T-cell (primary cell): ENCODE measurements at regions of chr17 and their contacts with region 1.

Region 1: DNA sequence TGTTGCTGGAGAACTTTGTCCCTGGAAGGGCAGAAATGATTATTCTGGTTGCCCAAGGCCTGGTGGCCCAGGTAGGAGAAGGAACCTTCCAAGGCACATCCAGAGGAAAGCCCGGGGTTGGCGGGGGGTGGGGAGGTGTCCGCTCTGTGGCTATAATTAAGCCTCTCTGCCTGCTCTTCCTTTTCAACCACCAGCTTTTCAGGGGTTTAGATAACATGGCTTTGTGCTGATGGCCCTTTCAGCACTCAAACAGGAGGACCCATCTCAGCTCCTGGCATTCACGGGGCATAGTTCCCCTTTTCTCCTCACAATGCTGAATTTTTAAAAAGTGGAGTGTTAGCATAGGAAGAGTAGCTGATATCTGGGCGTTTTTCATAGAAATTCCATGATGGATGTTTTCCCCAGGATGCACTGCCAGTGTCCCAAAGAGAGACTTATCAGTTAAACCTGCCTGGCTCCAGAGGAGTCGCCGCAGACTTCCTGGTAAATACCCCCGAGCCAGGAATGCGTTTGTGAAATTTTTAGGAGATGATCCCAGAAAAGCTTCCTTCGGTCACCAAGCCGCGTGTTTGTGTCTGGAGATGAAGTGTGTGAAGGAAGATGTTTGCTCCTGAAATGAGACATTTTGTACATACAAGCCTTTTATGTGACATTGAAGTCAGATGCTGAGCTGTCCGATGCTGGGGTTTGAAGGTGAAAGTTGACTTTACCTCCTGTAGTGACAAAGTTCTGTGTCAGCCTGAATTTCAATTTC is 188.5 kb downstream of the MSI2 start:
- DNase-seq: no peak
- ATAC-seq: no peak
- H3K4me3 ChIP-seq: no peak overlapping the region
- H3K4me3 Mint-ChIP-seq: no peak overlapping the region
- H3K27ac ChIP-seq: no peak overlapping the region
- H3K27ac Mint-ChIP-seq: no peak overlapping the region
- H3K4me1 ChIP-seq: peaks cover 13 to 53% of the 10 kb centered on the region in 2 experiments
- H3K4me1 Mint-ChIP-seq: peaks cover 69 to 78% (median 74%) of the 10 kb centered on the region in 3 donors
- H3K27me3 ChIP-seq: no peaks in the 10 kb centered on the region
- H3K27me3 Mint-ChIP-seq: no peaks in the 10 kb centered on the region

Region 2: GRCh38 chr17:57455063-57455914 is 10.4 kb after region 1 on chr17:
- CTCF ChIA-PET with region 1: interaction called, 3 to 11 read pairs
- POLR2A ChIA-PET with region 1: interaction called, 3 to 5 read pairs
- DNase-seq: peak in 14 of 35 experiments; percentile 7 to 52 (median 26)
- ATAC-seq: peak; percentile 74 to 89 (median 78)
- H3K4me3 ChIP-seq: peak overlapping the region in 1 of 2 donors; percentile 9
- H3K4me3 Mint-ChIP-seq: peak overlapping the region; percentile 51 to 81 (median 68)
- H3K27ac ChIP-seq: peak overlapping the region; percentile 44
- H3K27ac Mint-ChIP-seq: peak overlapping the region; percentile 85 to 90
- H3K4me1 ChIP-seq: peaks cover 20 to 76% of the 10 kb centered on the region in 2 experiments
- H3K4me1 Mint-ChIP-seq: peaks cover 68 to 79% (median 75%) of the 10 kb centered on the region in 3 donors
- H3K27me3 ChIP-seq: peaks cover 0 to 5% of the 10 kb centered on the region in 2 experiments
- H3K27me3 Mint-ChIP-seq: no peaks in the 10 kb centered on the region

Region 3: GRCh38 chr17:57955183-57955931 is 510.5 kb after region 1 on chr17 and contains the start of gene CUEDC1:
- CTCF ChIA-PET with region 1: no interaction called
- POLR2A ChIA-PET with region 1: no interaction called
- DNase-seq: peak; percentile 22 to 75 (median 50)
- ATAC-seq: peak; percentile 84 to 86 (median 85)
- H3K4me3 ChIP-seq: peak within 1 kb of the TSS; percentile 58 to 86
- H3K4me3 Mint-ChIP-seq: peak within 1 kb of the TSS; percentile 67 to 79 (median 76)
- H3K27ac ChIP-seq: no peak within 1 kb of the TSS
- H3K27ac Mint-ChIP-seq: no peak within 1 kb of the TSS
- H3K4me1 ChIP-seq: peaks cover 7 to 20% of the 10 kb centered on the region in 2 experiments
- H3K4me1 Mint-ChIP-seq: peaks cover 24 to 31% (median 27%) of the 10 kb centered on the region in 3 donors
- H3K27me3 ChIP-seq: peaks cover 2 to 32% of the 10 kb centered on the region in 2 experiments
- H3K27me3 Mint-ChIP-seq: peaks cover 10 to 25% of the 10 kb centered on the region in 2 donors
- total RNA-seq, gene CUEDC1: 0.33 to 1.4 (median 0.74) TPM in 4 of 5 donors, not detected in the other